HEK293T (cell line): ENCODE measurements at regions of chr17 and their contacts with region 1.

Region 1: DNA sequence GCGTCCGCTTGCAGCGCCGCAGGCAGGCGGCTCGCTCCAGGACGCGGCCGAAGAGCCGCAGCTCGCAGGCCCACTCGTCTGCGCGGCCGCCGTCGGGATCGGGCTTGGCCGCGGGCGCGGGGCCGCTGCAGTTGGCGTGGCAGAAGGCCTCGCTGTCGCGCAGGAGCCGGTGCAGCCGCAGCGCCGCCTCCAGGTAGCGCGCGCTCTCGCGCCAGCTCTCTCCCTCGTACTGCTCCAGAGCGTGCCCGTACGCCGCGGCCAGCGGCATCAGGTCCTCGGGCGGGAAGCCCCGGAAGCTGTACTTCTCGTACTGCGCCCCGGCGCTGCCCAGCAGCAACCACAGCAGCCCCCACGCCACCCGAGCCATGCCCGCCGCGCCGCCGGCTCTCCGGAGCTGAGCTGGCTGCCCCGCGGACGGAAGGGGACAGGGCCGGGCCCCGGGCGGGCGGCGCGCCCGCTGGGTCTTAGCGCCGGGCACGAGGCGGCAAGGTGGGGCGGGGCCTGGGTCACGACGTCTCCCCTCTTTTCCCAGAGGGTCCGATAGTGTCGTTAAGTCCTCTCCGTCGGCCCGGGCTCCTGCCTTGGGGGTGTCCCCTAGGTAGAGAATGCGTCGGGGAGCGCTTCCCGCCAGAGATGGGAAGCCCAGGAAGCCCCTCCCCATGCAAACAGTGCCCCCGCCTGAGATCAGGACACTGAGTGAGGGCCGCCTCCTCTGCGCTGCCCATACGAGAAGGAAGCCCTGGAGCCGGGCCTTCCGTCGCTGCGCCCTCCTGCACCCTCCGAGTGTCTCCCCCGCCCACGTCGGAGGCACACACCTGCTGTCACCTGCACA is at the start of gene P3H4:
- DNase-seq: peak; percentile 84

Region 2: GRCh38 chr17:41767324-41768042 is 44.3 kb before region 1 on chr17:
- CTCF ChIA-PET with region 1: no interaction called
- POLR2A ChIA-PET with region 1: no interaction called
- DNase-seq: no peak

Region 3: GRCh38 chr17:41777574-41778188 is 34.1 kb before region 1 on chr17:
- CTCF ChIA-PET with region 1: interaction called, 4 read pairs
- POLR2A ChIA-PET with region 1: interaction called, 11 read pairs
- DNase-seq: peak; percentile 42

Region 4: GRCh38 chr17:41792845-41793783 is 18.7 kb before region 1 on chr17:
- CTCF ChIA-PET with region 1: interaction called, 6 read pairs
- POLR2A ChIA-PET with region 1: interaction called, 18 read pairs
- DNase-seq: no peak

Region 5: DNA sequence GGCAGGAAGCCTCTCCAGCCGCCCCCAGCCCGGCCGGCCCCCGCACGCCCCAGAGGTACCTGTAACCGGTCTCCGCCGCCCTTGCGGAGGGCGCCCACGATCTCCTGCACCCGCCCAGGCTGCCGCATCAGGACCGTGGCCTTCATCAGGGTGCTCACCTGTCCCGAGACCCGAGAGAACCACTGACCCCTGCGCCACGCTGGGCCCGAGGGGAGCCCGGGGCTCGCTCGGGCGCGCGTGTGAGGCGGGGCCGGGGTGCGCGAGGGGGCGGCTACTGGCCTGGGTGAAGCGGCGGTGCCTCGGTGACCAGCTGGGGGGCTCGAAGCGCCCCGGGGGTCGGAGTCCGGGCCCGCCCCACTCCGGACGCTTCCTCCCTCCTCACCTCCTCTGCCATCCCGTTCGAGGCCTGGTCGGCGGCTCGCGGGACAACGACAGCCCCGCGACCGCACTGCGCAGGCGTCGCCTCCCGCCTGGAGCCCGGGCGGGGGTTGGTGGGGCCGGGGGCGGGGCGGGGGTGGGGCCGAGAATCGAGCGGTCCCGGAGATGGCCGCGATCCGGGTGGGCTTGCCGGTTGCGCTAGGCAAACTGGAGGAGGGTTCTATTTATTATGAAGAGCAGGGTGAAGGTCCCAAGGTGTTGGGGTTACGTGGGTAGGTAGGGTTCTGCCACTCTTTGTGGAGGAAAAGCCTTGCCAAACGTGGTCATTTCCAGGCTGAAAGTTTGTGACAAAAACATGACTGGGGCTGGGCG is 24.2 kb after region 1 on chr17 and contains the start of gene NT5C3B:
- CTCF ChIA-PET with region 1: interaction called, 3 read pairs
- POLR2A ChIA-PET with region 1: interaction called, 40 read pairs
- DNase-seq: peak; percentile 98

Region 6: GRCh38 chr17:42414704-42415409 is 603.1 kb after region 1 on chr17:
- CTCF ChIA-PET with region 1: no interaction called
- POLR2A ChIA-PET with region 1: no interaction called
- DNase-seq: peak; percentile 3